ENCODE measurements at regions of chr2 and their contacts with region 1.

Region 1: DNA sequence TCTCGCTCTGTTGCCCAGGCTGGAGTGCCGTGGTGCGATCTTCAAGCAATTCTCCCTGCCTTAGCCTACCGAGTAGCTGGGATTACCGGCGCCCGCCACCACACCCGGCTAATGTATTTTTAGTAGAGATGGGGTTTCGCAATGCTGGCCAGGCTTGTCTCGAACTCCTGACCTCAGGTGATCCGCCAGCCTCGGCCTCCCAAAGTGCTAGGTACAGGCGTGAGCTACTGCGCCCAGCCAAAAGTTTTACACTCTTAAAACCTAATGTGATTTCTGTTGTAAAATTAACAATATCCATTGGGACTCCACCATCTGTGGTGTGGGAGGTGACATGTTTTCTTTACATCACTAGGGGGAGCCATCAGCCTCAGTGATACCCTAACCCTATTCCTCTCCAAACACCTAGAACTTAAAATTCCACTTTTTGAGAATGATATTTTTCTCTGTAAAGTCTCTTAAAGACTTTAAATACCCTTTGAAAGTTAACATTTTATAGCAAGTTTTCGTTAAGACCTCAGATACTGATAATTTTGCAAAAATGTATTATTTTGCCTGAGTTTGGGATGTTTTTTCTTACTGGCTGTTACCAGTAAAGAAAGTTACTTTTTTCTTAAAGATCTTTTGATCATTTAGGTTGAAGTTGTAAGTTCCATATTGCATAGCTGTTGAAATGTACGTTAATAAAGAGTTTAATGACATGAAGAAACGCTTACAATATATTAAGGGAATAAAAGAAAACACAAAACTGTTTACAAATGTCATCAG is 11.6 kb upstream of the EIF2AK2 start:
- DNase-seq: no peak
- H3K4me3 ChIP-seq: no peak overlapping the region
- H3K27ac ChIP-seq: no peak overlapping the region
- H3K27me3 ChIP-seq: no peaks in the 10 kb centered on the region
- CTCF ChIP-seq: peak; percentile 21 to 77 (median 58)

Region 2: GRCh38 chr2:36478332-36478738 is 690.1 kb before region 1 on chr2:
- intact Hi-C with region 1: no loop called
- DNase-seq: no peak
- H3K4me3 ChIP-seq: no peak overlapping the region
- H3K27ac ChIP-seq: peak overlapping the region in 18 of 59 donors; percentile 6 to 81 (median 42)
- H3K27me3 ChIP-seq: no peaks in the 10 kb centered on the region
- CTCF ChIP-seq: no peak

Region 3: DNA sequence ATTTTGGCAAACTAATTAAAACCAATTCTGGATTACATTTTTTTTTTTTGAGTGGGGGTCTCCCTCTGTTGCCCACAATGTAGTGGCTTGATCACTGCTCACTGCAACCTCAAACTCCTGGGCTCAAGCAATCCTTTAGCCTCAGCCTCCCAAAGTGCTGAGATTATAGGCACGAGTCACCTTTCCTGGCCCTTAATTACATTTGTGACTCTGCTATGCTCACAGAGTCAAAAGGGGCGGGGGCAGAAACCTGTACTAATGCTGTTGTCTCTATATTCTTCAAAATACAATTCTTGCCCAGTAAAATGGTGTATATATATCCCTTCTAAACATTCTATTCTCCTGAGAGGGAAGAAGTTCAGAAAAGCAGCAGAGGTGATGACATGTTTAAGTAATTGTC is 133.0 kb after region 1 on chr2:
- intact Hi-C with region 1: no loop called
- DNase-seq: no peak
- H3K4me3 ChIP-seq: peak overlapping the region in 1 of 59 donors; percentile 5
- H3K27ac ChIP-seq: peak overlapping the region in 2 of 59 donors; percentile 5 to 60
- H3K27me3 ChIP-seq: no peaks in the 10 kb centered on the region
- CTCF ChIP-seq: no peak

Region 4: DNA sequence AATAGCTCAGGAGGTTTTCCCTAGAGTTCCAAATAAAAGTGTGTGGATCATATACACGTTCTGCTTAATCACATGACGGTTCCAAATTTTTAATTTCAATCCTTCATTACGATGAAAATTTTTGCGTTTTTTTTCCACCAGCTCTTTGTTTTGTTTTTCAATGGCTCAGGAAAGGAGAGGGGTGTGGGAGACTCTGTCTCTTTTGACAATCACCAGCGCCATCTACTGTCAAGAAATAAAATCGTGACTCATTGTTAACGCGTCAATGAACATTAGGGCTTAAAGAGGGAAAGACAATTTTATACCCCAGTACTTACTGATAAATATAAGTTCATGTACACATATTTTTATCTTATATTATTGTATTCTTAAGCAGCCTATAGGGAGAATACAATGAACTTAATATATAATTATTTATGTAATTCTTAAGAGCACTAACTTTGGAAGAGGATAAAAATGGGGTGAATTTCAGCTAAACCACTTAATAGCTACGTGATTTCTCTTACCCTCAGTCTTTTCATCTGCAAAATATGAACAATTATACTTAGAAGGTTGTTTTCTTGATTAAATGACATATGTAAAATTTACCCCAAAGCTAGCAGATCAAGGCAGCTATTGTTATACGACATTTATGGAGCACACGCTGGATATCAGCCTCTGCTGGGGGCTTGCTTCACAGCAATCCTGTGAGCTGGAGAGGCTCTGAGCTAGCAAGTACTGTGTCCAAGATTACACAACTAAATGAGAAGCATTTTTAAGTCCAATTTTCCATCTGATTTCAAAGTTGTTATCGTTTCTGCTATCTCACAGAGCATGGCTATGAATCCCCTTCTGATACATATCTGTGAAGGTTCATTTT is 709.3 kb after region 1 on chr2:
- intact Hi-C with region 1: loop called in 1 of 2 experiments (anchors 10 kb)
- DNase-seq: peak in 1 of 10 donors; percentile 14
- H3K4me3 ChIP-seq: no peak overlapping the region
- H3K27ac ChIP-seq: no peak overlapping the region
- H3K27me3 ChIP-seq: peaks cover 0 to 5% (median 0%) of the 10 kb centered on the region in 45 donors
- CTCF ChIP-seq: peak; percentile 63 to 97 (median 84)